Left colon (tissue), 2 donors: ENCODE measurements at regions of chr2 and their contacts with region 1.

Region 1: GRCh38 chr2:173402405-173402974 is 47.8 kb downstream of the CDCA7 start:
- DNase-seq: peak; percentile 58 to 81
- ATAC-seq: peak; percentile 98

Region 2: GRCh38 chr2:174039551-174040416 is 637.3 kb after region 1 on chr2:
- intact Hi-C with region 1: loop called in 1 of 2 experiments (anchors 10 kb)
- DNase-seq: peak; percentile 83 to 95
- ATAC-seq: peak; percentile 94

Region 3: DNA sequence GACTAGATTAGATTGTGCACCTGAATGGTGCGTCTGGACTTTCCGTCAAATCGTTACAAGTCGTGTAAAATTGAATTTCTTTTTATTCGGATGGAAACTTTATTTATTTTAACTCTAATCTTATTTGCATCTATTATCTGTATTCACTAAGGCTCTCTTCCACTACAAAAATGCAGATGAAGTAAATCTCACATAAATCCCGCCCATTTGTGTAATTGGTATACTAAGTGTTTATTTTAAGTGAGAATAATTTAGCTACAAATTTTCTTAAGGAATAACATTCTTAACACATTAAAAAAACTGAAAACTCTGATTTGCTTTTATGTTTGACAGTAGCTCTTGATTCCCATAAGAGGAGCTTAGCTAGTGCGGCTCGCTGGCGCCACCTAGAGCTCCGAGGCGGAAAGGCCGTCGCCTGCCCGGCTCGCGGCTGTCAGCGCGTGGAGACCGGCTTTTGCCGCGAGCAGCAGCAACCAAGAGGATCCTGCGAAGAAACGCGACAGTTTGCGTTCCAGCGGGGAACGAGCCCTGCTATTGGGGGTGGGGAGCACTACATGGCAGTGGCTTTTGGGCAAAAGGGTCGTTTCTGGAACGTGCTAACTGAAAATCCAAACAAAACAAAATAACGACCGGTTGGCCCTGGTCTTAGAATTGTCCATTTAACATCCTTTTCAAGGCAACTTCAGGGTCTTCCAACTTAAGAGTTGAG is 939.0 kb after region 1 on chr2:
- intact Hi-C with region 1: loop called in 1 of 2 experiments (anchors 10 kb)
- DNase-seq: peak; percentile 70 to 90
- ATAC-seq: peak; percentile 73